ENCODE measurements at regions of chr10 and their contacts with region 1.

Region 1: GRCh38 chr10:23525406-23525805 is 86.5 kb downstream of the OTUD1 start:
- DNase-seq: peak in 1 of 2 donors; percentile 13
- ATAC-seq: peak; percentile 87

Region 2: GRCh38 chr10:23158370-23158769 is 367.0 kb before region 1 on chr10:
- intact Hi-C with region 1: loop called in 1 of 2 experiments (anchors 10 kb)
- DNase-seq: peak in 1 of 2 donors; percentile 39
- ATAC-seq: peak; percentile 81

Region 3: GRCh38 chr10:23358357-23358756 is 167.0 kb before region 1 on chr10:
- intact Hi-C with region 1: no loop called
- DNase-seq: no peak
- ATAC-seq: no peak

Region 4: DNA sequence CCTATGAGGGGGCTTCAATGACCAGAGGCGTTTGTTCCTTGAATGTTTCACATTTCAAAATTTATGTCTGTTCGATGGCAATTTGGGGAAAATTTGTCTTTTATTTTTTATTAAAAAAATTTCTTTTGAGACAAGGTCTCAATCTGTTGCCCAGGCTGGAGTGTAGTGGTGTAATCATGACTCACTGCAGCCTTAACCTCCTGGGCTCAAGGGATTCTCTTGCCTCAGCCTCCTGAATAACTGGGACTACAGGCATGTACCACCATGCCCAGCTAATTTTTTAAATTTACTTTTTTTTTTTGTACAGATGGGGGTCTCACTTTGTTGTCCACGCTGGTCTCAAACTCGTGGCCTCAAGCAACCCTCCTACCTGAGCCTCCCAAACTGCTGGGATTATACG is 46.8 kb before region 1 on chr10:
- intact Hi-C with region 1: no loop called
- DNase-seq: no peak
- ATAC-seq: no peak

Region 5: DNA sequence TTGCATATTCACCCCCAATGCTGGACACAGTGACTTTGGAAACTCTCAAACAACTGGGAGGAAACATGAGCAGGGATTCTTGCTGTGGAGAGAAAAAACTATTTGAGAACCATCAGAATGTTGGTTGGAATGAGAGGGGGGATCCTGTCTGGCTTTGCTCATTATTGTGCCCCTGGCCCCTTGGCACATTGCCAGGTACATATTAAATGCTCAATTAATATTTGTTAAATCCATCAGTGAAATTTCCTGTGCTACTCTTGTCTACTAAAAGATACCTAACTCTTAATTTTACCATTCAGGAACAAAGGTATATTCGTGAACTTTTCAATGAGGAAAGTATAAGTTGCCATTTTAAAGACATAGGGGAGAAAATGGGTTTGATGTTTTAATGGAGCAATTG is 242.9 kb after region 1 on chr10:
- intact Hi-C with region 1: no loop called
- DNase-seq: no peak
- ATAC-seq: no peak